ENCODE measurements at regions of chr20 and their contacts with region 1.

Region 1: GRCh38 chr20:20712474-20713243 is at the start of gene RALGAPA2:
- DNase-seq: peak; percentile 91 to 95 (median 95)
- H3K4me3 ChIP-seq: peak within 1 kb of the TSS; percentile 59 to 97 (median 90)
- H3K4me3 Mint-ChIP-seq: peak within 1 kb of the TSS; percentile 86 to 94
- H3K27ac ChIP-seq: peak within 1 kb of the TSS; percentile 88 to 91
- H3K27ac Mint-ChIP-seq: peak within 1 kb of the TSS; percentile 89 to 96 (median 94)
- H3K4me1 ChIP-seq: peaks cover 22 to 37% of the 10 kb centered on the region in 2 donors
- H3K4me1 Mint-ChIP-seq: peaks cover 41% of the 10 kb centered on the region
- H3K27me3 ChIP-seq: no peaks in the 10 kb centered on the region
- H3K27me3 Mint-ChIP-seq: peaks cover 0 to 3% (median 3%) of the 10 kb centered on the region in 3 donors
- CTCF ChIP-seq: no peak
- polyA plus RNA-seq, gene RALGAPA2: 6.2 to 13.0 (median 8.9) TPM

Region 2: GRCh38 chr20:21303061-21303871 is 590.6 kb after region 1 on chr20 and contains the start of gene XRN2:
- intact Hi-C with region 1: loop called in 1 of 2 experiments (anchors 10 kb)
- DNase-seq: peak; percentile 89 to 95 (median 94)
- H3K4me3 ChIP-seq: peak within 1 kb of the TSS; percentile 60 to 90 (median 90)
- H3K4me3 Mint-ChIP-seq: peak within 1 kb of the TSS; percentile 94 to 98
- H3K27ac ChIP-seq: peak within 1 kb of the TSS; percentile 94 to 97
- H3K27ac Mint-ChIP-seq: peak within 1 kb of the TSS; percentile 94 to 99 (median 99)
- H3K4me1 ChIP-seq: peaks cover 19 to 29% of the 10 kb centered on the region in 2 donors
- H3K4me1 Mint-ChIP-seq: peaks cover 25% of the 10 kb centered on the region
- H3K27me3 ChIP-seq: no peaks in the 10 kb centered on the region
- H3K27me3 Mint-ChIP-seq: peaks cover 4 to 7% (median 4%) of the 10 kb centered on the region in 3 donors
- CTCF ChIP-seq: no peak
- polyA plus RNA-seq, gene XRN2: 53.1 to 111 (median 101) TPM